Mammary epithelial cell (primary cell): ENCODE measurements at regions of chr5 and their contacts with region 1.

Region 1: DNA sequence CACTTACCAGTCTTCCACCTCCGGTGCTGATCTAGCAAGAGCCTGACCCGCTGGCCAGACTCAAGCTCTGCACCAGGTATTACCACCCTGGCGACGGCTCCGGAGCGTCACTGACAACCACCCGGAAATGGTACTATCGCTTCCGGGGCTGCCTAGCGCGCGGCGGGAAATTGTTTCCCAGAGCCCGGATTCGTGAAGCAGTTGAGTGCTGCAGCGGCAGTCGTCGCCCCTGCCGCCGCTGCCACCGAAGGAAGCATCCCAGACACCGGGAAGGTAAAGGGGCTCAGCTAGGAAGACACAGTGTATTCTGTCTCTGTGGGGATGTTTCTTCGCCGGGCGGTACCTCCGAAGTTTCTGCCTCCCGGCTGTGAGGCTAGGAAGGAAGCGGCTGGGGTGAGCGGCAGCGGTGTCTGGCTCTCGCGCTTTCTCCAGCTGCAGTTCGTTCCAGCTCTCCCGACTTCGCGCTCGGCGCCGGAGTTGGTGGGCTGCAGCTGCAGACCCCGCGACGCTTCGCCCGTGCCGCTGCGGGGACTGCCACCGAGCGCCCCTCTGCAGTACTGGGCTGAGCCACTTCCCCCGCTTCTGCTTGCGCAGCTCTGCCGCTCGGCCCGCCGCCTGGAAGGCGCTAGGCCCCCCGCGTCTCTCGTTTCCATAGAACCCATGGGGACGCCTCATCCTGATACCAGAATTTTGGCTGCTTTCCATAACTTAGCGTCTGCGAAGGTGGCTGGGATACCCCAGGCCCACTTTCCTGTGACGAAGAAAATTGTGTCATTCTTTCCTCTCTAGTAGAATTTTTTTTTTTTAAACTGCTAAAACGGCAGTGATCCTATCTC is at the starts of genes KIAA0825 and SLF1:
- DNase-seq: peak; percentile 90
- H3K4me3 ChIP-seq: peak within 1 kb of the TSS; percentile 59 to 94 (median 59)
- H3K27ac ChIP-seq: peak within 1 kb of the TSS; percentile 83
- H3K4me1 ChIP-seq: peaks cover 13% of the 10 kb centered on the region
- H3K27me3 ChIP-seq: no peaks in the 10 kb centered on the region
- CTCF ChIP-seq: no peak
- total RNA-seq, gene KIAA0825: 0.89 to 9.3 TPM
- total RNA-seq, gene SLF1: 4.2 to 8.9 TPM

Region 2: DNA sequence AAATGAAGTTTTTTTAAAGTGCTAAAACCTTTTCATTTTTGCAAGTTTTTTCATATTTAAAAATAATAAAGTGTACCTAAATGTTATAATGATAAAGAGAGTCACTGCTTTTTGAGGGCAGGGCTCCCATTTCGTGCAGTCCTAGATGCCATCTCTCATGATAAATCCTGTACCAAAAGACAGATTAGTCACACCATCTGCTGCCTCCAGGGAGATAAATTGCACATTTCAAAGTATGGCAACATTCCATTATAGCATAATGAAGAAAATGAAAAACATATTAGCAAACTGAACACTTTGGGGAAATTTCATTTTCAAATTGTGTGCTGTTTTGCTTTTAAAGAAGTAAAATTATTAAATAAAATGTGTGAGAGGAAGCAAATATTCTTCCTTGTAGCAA is 257.6 kb before region 1 on chr5:
- CTCF ChIA-PET with region 1: no interaction called
- dilution Hi-C with region 1: no loop called
- in situ Hi-C with region 1: no loop called
- intact Hi-C with region 1: loop called (anchors 5 kb)
- DNase-seq: no peak
- H3K4me3 ChIP-seq: no peak overlapping the region
- H3K27ac ChIP-seq: no peak overlapping the region
- H3K4me1 ChIP-seq: peaks cover 7% of the 10 kb centered on the region
- H3K27me3 ChIP-seq: no peaks in the 10 kb centered on the region
- CTCF ChIP-seq: no peak

Region 3: DNA sequence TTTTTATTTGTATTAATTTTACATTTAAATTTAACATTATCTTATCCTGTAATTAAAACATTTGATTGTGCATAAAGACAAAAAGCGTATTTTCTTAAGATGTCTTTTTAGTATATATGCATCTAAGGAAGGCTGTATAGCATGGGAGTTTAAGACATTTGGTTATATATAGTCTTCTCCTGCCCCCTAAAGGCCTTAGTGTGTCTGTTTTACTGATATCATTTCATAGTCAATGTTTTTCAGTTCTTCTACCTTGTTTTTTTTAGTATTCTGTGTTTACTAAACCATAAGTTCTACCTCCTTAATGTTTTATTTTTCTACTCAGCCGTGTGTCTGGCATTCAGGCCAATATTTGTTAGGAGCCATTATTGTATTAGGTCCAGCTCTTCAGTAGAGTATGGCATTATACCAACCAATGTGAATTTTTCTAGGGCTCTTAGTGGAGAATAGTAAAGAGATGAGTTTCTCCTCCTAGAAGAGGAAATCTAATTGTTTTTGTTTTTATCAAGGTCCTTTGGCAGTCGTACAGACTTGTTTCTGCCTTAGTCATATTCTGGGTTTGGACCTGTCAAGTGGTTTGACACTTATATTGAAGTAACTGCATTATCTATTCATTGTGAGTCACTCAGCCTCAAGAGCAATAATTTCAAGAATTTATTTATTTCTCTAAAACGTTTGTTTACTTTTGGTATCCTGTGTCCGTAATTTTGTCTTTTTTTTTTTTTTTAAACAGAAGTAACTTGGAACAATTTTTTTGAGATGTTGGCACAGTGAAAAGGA is 74.5 kb after region 1 on chr5:
- CTCF ChIA-PET with region 1: no interaction called
- dilution Hi-C with region 1: no loop called
- in situ Hi-C with region 1: no loop called
- intact Hi-C with region 1: loop called (anchors 5 kb)
- DNase-seq: peak; percentile 86
- H3K4me3 ChIP-seq: peak overlapping the region in 1 of 3 experiments; percentile 14
- H3K27ac ChIP-seq: peak overlapping the region; percentile 29
- H3K4me1 ChIP-seq: peaks cover 14% of the 10 kb centered on the region
- H3K27me3 ChIP-seq: no peaks in the 10 kb centered on the region
- CTCF ChIP-seq: peak; percentile 23 to 28

Region 4: GRCh38 chr5:94740286-94740685 is 121.6 kb after region 1 on chr5:
- CTCF ChIA-PET with region 1: no interaction called
- dilution Hi-C with region 1: no loop called
- in situ Hi-C with region 1: no loop called
- intact Hi-C with region 1: loop called (anchors 5 kb)
- DNase-seq: no peak
- H3K4me3 ChIP-seq: no peak overlapping the region
- H3K27ac ChIP-seq: no peak overlapping the region
- H3K4me1 ChIP-seq: no peaks in the 10 kb centered on the region
- H3K27me3 ChIP-seq: no peaks in the 10 kb centered on the region
- CTCF ChIP-seq: no peak

Region 5: DNA sequence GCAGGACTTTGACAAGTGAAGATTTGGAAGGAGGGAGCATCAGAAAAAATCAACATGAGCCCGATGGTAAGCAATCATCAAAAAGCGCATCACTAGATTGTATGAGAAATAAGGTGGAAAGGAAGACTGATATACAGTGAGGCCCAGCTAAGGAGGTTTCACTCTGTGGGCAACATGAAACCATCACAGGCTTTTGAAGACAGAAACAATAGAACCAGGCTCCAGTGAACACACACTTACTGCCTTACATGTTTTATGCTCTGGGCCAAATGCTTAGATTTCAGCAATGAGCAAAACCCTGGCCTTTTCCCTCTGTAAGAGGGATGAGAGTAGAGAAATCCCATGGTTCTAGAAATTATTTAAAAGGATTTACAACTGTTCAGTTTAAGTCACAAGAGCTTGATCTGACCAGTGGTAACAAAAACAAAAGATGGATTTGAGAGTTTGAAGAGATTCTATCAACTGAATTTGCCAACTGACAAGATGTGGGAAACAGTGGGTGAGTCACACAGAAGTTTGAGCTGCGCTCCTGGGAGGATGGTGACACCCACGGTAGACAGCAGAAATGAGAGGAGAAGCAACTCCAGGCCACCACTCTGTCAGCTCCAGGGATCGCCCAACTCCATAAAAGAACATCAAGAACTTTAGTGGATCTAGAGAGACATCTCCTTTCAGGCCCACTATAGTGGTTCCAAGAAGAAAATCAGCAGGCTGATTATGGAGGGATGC is 404.4 kb after region 1 on chr5:
- CTCF ChIA-PET with region 1: no interaction called
- dilution Hi-C with region 1: no loop called
- in situ Hi-C with region 1: no loop called
- intact Hi-C with region 1: no loop called
- DNase-seq: peak; percentile 13
- H3K4me3 ChIP-seq: no peak overlapping the region
- H3K27ac ChIP-seq: no peak overlapping the region
- H3K4me1 ChIP-seq: no peaks in the 10 kb centered on the region
- H3K27me3 ChIP-seq: no peaks in the 10 kb centered on the region
- CTCF ChIP-seq: no peak